ENCODE measurements at regions of chr13 and their contacts with region 1.

Region 1: GRCh38 chr13:109654341-109655205 is 131.8 kb downstream of the IRS2 start:
- DNase-seq: peak in 1 of 3 donors; percentile 60
- ATAC-seq: peak; percentile 74 to 78
- H3K4me3 ChIP-seq: no peak overlapping the region
- H3K27ac ChIP-seq: no peak overlapping the region
- H3K4me1 ChIP-seq: no peaks in the 10 kb centered on the region
- H3K27me3 ChIP-seq: no peaks in the 10 kb centered on the region

Region 2: DNA sequence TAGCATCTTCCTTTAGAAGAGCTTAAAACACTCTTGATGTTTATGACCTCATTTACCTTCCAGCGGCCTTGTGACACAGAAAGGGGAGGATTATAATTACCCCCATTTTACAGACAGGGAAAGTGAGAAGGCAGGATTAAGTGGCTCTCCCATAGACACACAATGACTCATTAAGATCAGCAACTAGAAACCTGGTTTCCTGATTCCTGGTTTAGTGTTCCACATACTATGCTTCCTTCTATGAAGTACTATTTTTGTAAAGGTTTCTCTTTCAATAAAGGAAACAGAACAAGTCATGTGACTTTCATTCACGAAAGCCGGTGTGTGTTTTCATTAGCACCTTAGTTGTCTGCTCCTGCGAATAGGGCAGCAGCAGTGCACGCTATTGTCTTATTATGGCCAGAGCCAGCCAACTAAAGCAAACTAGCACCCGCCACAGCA is 123.5 kb after region 1 on chr13:
- intact Hi-C with region 1: loop called in 1 of 4 experiments (anchors 10 kb)
- DNase-seq: no peak
- ATAC-seq: peak; percentile 32 to 38
- H3K4me3 ChIP-seq: peak overlapping the region; percentile 29
- H3K27ac ChIP-seq: no peak overlapping the region
- H3K4me1 ChIP-seq: peaks cover 9% of the 10 kb centered on the region
- H3K27me3 ChIP-seq: no peaks in the 10 kb centered on the region